ENCODE measurements at regions of chr2 and their contacts with region 1.

Region 1: GRCh38 chr2:97747716-97748115 is 34.3 kb downstream of the ZAP70 start:
- DNase-seq: no peak
- H3K4me3 Mint-ChIP-seq: no peak overlapping the region
- H3K27ac Mint-ChIP-seq: no peak overlapping the region
- H3K4me1 Mint-ChIP-seq: peaks cover 43% of the 10 kb centered on the region
- H3K27me3 Mint-ChIP-seq: no peaks in the 10 kb centered on the region

Region 2: GRCh38 chr2:97710596-97711386 is 36.9 kb before region 1 on chr2:
- intact Hi-C with region 1: loop called (anchors 1 kb)
- DNase-seq: peak; percentile 69
- H3K4me3 Mint-ChIP-seq: peak overlapping the region; percentile 17
- H3K27ac Mint-ChIP-seq: peak overlapping the region; percentile 100
- H3K4me1 Mint-ChIP-seq: peaks cover 49% of the 10 kb centered on the region
- H3K27me3 Mint-ChIP-seq: no peaks in the 10 kb centered on the region